ENCODE measurements at regions of chr19 and their contacts with region 1.

Region 1: DNA sequence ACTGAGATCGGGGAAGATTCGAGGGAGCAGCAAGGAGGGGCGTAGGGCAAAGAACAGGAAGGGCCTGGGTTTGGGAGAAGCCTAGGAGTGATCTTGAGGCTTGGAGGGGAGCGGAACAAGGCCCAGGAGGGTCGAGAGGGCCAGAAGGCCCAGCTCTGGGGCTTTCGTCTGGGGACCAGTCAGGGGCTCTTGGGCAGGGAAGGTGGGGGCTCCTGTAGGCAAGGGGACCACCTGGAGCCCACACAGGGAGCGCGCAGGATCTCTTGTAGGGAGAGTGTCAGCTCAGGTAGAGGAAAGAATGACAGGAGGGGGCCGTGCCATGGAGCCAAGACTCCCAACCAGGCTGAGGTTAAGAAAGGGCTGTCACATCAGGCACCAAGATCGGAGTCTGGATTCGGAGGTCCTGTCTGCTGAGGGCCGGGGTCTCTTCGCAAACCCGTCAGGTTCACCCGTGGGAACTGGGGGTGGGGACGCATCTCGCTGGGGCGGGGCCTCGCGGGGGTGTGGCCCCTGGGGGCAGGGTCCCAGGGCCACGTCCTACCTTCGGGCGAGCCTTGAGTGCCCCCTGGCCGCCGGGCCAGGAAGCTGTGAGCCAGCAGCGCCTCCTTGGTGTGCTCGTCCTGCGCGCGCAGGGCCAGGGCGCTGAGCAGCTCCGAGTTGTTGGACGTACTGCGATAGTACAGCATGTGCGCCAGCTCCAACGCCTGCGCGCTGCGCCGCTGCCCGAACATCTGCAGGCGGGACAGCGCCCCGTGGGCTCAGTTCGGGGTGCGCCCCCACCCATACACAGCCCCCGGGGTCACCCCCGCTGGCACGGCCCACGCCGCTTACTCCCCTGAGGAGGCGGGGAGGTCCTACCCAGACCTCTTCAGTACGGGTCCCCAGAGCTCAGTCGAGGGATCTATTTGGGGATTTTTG is 8.4 kb downstream of the EMP3 start:
- DNase-seq: peak; percentile 88 to 96 (median 92)
- ATAC-seq: peak; percentile 62
- H3K4me3 Mint-ChIP-seq: peak overlapping the region; percentile 92 to 100 (median 96)
- H3K27ac Mint-ChIP-seq: peak overlapping the region; percentile 95 to 100 (median 98)
- H3K4me1 Mint-ChIP-seq: peaks cover 27 to 64% (median 52%) of the 10 kb centered on the region in 4 donors
- H3K27me3 Mint-ChIP-seq: no peaks in the 10 kb centered on the region

Region 2: DNA sequence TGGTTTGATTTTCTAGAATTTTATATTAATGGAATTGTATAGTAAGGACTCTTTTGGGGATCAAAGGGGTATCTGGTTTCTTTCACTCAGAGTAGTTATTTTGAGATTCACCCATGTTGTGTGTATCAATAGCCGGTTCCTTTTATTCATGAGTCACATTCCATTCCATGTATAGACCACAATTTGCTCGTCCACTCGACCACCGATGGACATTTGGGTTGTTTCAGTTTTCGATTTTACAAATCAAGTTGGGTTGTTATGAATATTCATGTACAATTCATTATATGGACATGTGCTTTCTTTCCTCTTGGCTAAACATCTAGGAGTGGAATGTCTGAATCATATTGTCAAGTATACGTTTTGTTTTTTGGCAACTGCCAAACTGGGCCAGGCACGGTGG is 18.0 kb before region 1 on chr19:
- POLR2A ChIA-PET with region 1: interaction called, 484 read pairs
- DNase-seq: no peak
- ATAC-seq: no peak
- H3K4me3 Mint-ChIP-seq: no peak overlapping the region
- H3K27ac Mint-ChIP-seq: peak overlapping the region in 3 of 10 donors; percentile 21 to 30 (median 23)
- H3K4me1 Mint-ChIP-seq: peaks cover 5 to 13% (median 11%) of the 10 kb centered on the region in 4 donors
- H3K27me3 Mint-ChIP-seq: no peaks in the 10 kb centered on the region

Region 3: GRCh38 chr19:48321622-48322591 is 11.8 kb before region 1 on chr19:
- POLR2A ChIA-PET with region 1: interaction called, 484 read pairs
- DNase-seq: peak; percentile 98 to 100 (median 100)
- ATAC-seq: peak; percentile 67 to 77
- H3K4me3 Mint-ChIP-seq: peak overlapping the region; percentile 92 to 100 (median 96)
- H3K27ac Mint-ChIP-seq: peak overlapping the region; percentile 98 to 100 (median 100)
- H3K4me1 Mint-ChIP-seq: peaks cover 32 to 67% (median 62%) of the 10 kb centered on the region in 4 donors
- H3K27me3 Mint-ChIP-seq: no peaks in the 10 kb centered on the region